ENCODE measurements at regions of chr1 and their contacts with region 1.

Region 1: DNA sequence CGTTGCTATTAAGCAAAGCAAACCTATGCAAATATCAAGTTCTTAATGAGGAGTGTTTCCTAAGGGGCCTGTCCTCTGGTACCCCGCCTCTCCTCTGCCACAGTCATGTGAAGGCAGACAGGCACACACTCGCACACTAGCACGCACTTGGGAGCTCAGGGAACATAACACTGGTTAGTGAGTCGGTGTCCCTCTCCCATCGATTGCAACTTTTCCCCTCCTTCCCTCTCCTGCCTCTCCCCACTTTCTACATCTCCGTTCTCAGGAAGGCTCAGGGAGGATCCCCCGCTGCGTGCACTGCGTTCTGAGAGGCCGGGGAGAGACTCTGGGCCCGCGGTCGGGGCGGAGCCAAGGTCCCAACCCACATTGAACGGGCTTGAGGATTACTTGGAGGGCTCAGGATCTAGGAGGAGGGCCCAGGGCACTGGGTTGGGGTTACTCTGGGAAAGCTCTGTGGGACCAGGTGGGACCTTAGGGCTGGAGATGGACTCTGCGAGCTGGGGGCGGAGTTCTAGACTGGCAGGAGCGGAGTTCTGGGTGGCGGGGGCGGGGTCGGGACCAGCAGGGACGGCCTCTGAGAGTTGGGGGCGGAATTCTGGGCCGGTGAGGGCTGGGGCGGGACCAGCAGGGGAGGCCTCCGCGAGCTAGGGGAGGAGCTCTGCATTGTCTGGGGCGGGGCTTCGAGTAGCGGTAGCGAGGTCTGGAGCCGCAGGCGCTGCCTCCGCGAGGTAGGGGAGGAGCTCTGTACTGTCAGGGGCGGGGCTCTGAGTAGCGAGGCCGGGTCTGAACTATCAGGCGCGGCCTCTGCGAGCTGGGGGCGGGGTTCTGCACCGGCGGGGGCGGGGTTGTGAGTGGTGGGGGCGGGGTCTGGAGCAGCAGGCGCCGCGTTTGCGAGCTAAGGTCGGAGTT is 533 bp upstream of the LEPR start:
- DNase-seq: peak; percentile 99
- ATAC-seq: peak; percentile 97

Region 2: DNA sequence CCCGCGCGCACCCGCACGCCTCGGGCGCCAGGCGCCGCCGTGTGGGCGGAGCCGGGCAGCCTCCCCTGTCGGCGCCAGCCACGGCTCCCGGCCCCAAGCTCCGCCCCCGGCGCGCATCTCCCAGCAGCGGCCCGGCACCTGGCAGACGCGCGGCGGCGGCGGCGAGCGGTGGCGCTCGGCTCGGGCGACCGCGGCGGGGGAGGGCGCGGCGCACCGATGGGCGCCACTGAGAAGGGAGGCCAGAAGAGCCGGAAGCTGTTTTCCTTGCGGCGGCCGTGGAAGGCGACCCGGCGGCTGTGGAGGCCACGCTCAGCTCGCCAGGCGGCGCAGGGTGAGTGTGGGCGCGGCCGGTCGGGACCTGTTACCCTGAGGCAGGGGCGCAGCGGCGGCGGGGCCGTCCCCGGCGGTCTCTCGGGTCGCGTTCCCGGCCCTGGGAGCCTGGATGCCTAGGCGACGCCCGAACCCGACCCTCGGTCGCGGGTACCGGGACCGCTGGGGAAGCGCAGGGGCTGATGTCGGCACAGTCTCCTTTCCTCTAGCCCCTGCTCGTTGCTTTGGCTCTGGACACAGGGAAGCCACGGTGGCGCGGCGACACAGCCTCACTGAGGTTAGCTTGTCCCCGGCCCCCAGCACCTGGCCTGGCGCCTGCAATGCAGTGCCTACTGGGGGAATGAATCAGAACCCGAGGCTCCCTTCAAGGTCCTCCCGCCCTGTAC is 165.5 kb before region 1 on chr1:
- intact Hi-C with region 1: loop called (anchors 5 kb)
- DNase-seq: peak; percentile 85
- ATAC-seq: peak; percentile 85

Region 3: DNA sequence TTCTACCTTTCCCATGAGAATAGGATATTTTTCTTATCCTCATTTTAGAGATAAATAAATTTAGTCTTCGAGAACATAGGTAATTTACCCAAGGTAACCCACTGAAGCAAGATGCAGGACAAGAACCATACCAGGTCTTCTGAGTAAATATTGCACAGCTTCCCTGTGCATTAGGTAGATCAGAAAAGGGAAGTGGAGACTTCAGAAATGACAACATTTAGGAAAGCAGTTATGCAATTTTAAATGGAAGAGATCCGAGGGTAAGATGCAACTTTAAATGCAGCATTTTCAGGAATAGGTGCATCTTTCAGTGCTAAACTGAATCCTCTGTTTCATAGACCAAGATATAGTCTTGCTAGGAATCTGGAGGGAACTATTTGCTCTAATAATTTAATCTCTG is 907.7 kb after region 1 on chr1:
- intact Hi-C with region 1: no loop called
- DNase-seq: no peak
- ATAC-seq: no peak